Body of pancreas (tissue), 4 donors: ENCODE measurements at regions of chr11 and their contacts with region 1.

Region 1: DNA sequence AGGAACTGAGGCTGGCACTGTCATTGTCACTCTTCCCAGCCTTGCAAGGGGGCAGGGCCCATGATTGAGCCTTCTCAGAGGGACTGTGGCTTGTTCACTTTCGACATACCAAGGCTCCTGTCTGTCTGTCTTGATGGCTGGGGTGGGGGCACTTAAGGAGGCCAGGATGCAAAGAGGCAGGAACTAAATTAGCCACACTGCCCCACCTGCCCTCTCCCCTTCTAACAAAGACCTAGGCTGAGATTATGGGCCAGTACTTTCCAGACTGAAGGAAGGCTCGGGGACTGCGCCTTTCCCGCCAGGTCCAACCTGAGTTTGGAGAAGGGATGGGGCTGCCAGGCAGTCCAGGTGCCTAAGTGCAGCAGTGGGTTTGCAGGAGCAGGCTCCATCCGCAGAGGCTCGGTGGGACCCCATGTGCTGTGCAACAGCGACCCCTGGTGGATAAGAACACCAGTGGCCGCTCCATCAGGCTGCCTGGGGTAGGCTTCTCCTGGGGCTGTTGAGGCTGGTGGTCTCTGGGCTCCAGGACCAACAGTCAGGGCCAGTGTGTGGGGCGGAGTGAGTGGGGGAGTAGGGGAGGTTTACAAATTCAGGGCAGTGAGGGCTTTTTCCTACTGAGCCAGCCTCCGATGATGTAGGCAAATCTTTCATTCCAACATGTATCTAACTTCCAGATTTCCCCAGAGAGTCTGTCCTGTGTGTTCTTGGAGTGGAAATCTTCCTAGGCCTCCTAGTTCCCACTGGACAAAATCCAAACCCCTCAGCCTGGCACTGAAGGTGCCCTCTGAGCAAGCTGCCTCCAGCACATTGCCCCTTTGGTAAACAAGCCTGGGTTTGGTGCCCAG is 93.9 kb downstream of the INSC start:
- DNase-seq: peak; percentile 77 to 84 (median 82)
- ATAC-seq: peak; percentile 85
- H3K4me3 ChIP-seq: no peak overlapping the region
- H3K27ac ChIP-seq: no peak overlapping the region
- H3K4me1 ChIP-seq: no peaks in the 10 kb centered on the region
- H3K27me3 ChIP-seq: no peaks in the 10 kb centered on the region
- CTCF ChIP-seq: peak; percentile 75 to 94 (median 93)
- POLR2A ChIP-seq: no peak

Region 2: GRCh38 chr11:14789879-14790484 is 418.6 kb before region 1 on chr11:
- intact Hi-C with region 1: no loop called
- DNase-seq: no peak
- ATAC-seq: no peak
- H3K4me3 ChIP-seq: no peak overlapping the region
- H3K27ac ChIP-seq: no peak overlapping the region
- H3K4me1 ChIP-seq: peaks cover 4% of the 10 kb centered on the region
- H3K27me3 ChIP-seq: no peaks in the 10 kb centered on the region
- CTCF ChIP-seq: peak in 6 of 7 experiments; percentile 30 to 59 (median 52)
- POLR2A ChIP-seq: no peak

Region 3: DNA sequence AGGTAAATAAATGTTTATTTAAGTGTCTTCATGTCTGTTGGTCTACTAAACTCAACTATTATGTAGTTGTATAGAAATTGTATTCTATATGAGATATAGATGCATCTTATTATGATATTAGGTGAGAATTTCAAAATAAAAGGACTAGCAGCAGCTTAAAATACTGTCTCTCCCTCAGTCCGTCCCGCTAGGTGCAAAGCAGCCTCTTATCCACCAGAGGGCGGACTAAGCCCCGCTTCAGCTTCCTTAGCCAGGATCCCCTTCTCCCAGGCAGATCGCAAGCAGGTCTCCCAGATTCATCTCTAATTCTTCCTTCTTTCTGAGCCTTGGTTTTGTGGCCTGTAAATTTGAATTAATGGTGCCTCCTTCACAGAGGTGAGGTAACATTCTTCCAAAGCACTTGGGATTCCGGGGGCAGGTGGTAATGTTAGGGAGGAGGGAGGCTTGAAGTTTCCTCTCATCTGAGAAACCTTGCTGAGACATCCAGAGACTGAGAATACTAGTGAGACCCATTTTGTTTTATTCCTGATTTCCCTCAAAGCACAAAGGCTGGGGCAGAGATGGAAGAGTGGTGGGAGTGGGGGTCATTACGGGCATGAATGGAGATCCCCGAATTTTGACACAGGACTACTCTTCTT is 107.4 kb before region 1 on chr11:
- intact Hi-C with region 1: loop called (anchors 2 kb)
- DNase-seq: peak; percentile 69 to 74 (median 74)
- ATAC-seq: peak; percentile 85
- H3K4me3 ChIP-seq: no peak overlapping the region
- H3K27ac ChIP-seq: no peak overlapping the region
- H3K4me1 ChIP-seq: no peaks in the 10 kb centered on the region
- H3K27me3 ChIP-seq: no peaks in the 10 kb centered on the region
- CTCF ChIP-seq: peak; percentile 84 to 94 (median 89)
- POLR2A ChIP-seq: no peak